Posterior cingulate gyrus (tissue), 11 donors: ENCODE measurements at regions of chr6 and their contacts with region 1.

Region 1: DNA sequence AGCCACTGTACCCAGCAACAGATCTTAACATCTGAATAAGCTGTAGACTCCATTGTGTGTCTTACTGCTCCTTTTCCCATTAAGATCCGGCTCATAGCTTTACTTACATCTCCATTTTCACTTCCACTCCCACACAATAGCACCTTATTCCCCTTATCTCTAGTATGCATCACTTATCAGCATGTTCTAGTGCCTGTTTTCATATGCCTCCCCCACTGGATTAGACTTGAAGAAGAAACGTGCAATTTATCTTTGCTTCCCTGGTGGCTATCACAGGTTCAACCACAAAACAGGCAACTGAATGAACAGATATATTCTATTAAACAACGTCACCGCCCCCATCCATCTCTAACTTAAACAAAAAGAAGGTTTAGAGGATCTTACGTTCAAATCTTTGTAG is 12.1 kb downstream of the SSR1 start:
- DNase-seq: no peak

Region 2: DNA sequence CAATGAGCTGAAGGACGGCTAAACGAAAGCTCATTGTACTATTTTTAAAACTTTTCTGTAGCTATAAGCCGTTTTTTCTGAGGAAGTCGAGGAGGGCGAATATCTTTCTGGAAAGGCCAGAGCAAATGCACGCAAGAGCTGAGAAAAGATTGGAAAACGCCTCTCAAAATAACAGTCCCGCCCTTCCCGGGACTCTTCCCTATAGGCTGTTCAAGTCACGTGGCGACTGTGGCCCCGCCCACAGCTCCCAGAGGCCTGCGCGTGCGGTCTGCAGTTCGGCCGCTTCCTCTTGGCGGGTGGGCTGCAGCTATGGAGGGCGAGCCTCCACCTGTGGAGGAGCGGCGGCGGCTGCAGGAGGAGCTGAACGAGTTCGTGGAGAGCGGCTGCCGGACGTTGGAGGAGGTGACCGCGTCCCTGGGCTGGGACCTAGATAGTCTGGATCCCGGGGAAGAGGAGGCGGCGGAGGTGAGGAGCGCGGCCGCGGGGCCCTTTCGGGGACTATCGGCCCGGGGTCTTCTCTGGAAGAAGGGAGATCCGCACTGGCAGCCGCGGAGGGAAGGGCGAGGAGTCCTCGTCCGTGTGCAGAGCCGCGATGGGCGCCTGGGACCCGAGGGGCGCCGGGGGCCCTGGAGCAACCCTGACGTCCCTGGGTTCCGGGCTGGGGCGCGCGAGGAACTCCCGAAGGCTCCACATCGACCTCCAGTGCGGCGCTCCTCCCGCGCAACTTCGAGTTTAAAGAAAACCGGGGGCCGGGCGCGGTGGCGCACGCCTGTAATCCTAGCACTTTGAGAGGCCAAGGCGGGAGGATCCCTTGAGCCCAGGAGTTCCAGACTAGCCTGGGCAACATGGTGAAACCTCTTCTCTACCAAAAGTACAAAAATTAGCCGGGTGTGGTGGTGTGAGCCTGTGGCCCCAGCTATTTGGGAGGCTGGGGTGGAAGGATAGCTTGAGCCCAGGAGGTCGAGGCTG is 289.3 kb after region 1 on chr6 and contains the start of gene SNRNP48:
- intact Hi-C with region 1: loop called (anchors 10 kb)
- DNase-seq: peak; percentile 84 to 99 (median 92)